ENCODE measurements at regions of chrX and their contacts with region 1.

Region 1: DNA sequence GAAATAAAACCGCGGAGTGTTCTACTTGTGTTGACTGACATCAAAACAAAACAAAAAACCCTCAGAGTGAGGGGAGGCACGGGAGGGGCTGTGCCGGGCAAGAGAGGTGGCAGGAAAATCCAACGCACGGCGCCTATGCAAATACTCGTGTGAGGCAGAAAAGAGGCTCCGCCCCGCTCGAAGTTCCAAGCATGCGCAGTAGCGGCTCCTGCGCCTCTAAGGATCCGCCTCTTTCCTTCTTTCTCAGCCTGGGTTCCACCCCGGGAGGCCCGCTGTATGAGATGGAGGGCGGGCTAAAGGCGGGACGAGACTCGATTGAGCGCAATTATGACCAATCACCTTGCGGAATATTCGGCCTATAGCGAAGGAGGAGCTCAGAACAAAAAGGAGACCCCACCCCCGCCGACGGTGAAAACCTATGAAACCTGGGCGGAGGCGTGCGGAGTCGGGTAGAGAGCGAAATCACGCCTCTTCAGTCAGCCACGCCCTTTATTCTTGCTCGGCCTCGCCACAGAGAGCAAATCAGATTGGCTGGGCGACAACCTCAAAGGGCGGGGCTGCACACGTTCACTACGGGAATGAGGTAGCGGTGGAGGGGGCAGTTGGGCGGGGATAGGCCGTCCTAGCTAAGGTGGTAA is 720 bp upstream of the CDK16 start:
- DNase-seq: peak; percentile 97
- ATAC-seq: peak; percentile 86
- H3K4me3 Mint-ChIP-seq: peak overlapping the region; percentile 85
- H3K27ac Mint-ChIP-seq: peak overlapping the region; percentile 99
- H3K4me1 Mint-ChIP-seq: peaks cover 39% of the 10 kb centered on the region
- H3K27me3 Mint-ChIP-seq: no peaks in the 10 kb centered on the region

Region 2: GRCh38 chrX:47233337-47234113 is 15.8 kb after region 1 on chrX:
- CTCF ChIA-PET with region 1: no interaction called
- POLR2A ChIA-PET with region 1: interaction called, 42 read pairs
- DNase-seq: peak; percentile 95
- ATAC-seq: peak; percentile 93
- H3K4me3 Mint-ChIP-seq: peak overlapping the region; percentile 91
- H3K27ac Mint-ChIP-seq: peak overlapping the region; percentile 99
- H3K4me1 Mint-ChIP-seq: peaks cover 24% of the 10 kb centered on the region
- H3K27me3 Mint-ChIP-seq: no peaks in the 10 kb centered on the region

Region 3: GRCh38 chrX:47351706-47352105 is 133.9 kb after region 1 on chrX:
- CTCF ChIA-PET with region 1: no interaction called
- POLR2A ChIA-PET with region 1: no interaction called
- DNase-seq: no peak
- ATAC-seq: no peak
- H3K4me3 Mint-ChIP-seq: no peak overlapping the region
- H3K27ac Mint-ChIP-seq: no peak overlapping the region
- H3K4me1 Mint-ChIP-seq: no peaks in the 10 kb centered on the region
- H3K27me3 Mint-ChIP-seq: no peaks in the 10 kb centered on the region

Region 4: DNA sequence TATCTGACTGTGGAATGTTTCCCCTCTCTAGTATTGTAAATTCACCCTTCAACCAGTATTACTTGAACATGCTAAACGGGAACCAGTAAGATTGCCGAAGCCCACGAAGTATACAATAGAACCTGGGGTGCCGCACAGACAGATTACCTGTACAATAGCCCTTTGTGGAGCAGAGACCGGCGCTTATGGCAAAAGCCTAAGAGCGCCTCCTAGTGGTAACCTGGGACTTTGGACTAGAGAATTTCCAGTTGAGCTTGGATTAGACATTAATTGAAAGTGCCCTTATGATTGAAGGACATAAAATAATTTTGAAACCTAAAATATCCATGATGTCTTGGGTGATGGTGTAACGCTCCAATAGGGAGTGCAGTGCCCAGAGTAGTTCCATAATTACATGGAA is 166.7 kb after region 1 on chrX:
- CTCF ChIA-PET with region 1: interaction called, 10 read pairs
- POLR2A ChIA-PET with region 1: no interaction called
- DNase-seq: peak; percentile 76
- ATAC-seq: peak; percentile 58
- H3K4me3 Mint-ChIP-seq: no peak overlapping the region
- H3K27ac Mint-ChIP-seq: peak overlapping the region; percentile 11
- H3K4me1 Mint-ChIP-seq: peaks cover 26% of the 10 kb centered on the region
- H3K27me3 Mint-ChIP-seq: no peaks in the 10 kb centered on the region